Spleen (tissue), 13 donors: ENCODE measurements at regions of chr1 and their contacts with region 1.

Region 1: DNA sequence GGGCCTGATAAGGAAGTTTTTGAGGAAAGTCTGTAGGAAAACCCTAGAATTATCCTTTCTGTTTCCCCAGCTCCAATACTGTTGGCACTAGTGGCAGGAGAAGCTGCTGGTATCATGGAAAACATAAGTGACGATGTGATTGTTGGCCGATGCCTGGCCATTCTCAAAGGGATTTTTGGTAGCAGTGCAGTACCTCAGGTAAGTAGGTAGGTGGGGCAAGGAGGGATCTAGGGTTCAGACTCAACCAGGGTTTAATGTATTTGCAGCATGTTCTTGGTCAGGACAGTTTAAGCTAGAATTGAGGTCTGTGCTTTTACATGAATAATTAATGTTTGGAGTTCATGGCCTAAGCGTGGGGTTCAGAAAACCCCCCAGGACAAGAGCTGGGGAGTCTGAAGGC is 62.1 kb downstream of the KDM1A start:
- DNase-seq: no peak
- H3K4me3 ChIP-seq: no peak overlapping the region
- H3K27ac ChIP-seq: no peak overlapping the region
- H3K4me1 ChIP-seq: peaks cover 0 to 10% (median 0%) of the 10 kb centered on the region in 6 donors
- H3K27me3 ChIP-seq: no peaks in the 10 kb centered on the region
- CTCF ChIP-seq: peak in 1 of 11 experiments; percentile 10
- POLR2A ChIP-seq: no peak

Region 2: DNA sequence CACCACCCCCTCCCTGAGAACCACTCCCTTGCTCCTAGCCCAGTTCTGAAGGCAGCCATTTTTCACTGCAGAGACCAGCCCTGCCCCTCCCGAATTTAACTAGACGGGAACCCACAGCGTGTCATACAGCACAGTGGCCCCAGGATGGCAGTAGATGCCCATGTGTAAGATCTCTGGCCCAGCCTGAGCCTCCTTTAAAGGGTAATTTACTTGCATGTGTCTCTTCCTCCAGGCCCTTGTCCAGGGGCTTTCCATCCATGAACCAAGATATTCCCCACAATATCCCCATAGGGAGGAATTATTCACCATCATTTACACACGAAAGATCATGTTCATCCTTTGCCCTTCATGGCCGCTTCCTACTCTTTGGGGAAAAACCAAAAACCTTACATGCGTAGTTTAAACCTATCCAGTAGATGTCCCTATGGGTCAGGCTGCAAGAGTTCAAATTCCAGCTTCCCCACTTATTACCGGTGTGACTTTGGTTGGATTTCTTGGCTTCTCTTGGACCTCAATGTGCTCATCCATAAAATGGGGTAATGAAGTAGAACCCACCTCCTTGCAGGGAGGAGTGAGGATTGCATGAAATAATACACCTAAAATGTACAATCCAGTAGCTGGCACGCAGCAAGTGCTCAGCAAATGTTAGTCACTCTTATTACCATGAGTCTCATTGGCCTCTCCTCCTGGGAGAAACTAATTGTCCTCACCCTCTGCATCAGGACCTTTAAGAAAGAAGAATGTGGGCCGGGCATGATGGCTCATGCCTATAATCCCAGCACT is 104.7 kb before region 1 on chr1:
- intact Hi-C with region 1: loop called (anchors 10 kb)
- DNase-seq: peak; percentile 77
- H3K4me3 ChIP-seq: no peak overlapping the region
- H3K27ac ChIP-seq: no peak overlapping the region
- H3K4me1 ChIP-seq: peaks cover 0 to 12% (median 4%) of the 10 kb centered on the region in 6 donors
- H3K27me3 ChIP-seq: peaks cover 0 to 27% (median 0%) of the 10 kb centered on the region in 7 donors
- CTCF ChIP-seq: peak; percentile 33 to 87 (median 74)
- POLR2A ChIP-seq: no peak

Region 3: GRCh38 chr1:23210351-23210785 is 129.0 kb after region 1 on chr1:
- intact Hi-C with region 1: no loop called
- DNase-seq: no peak
- H3K4me3 ChIP-seq: no peak overlapping the region
- H3K27ac ChIP-seq: no peak overlapping the region
- H3K4me1 ChIP-seq: no peaks in the 10 kb centered on the region
- H3K27me3 ChIP-seq: peaks cover 0 to 59% (median 18%) of the 10 kb centered on the region in 7 donors
- CTCF ChIP-seq: no peak
- POLR2A ChIP-seq: no peak